ENCODE measurements at regions of chr16 and their contacts with region 1.

Region 1: DNA sequence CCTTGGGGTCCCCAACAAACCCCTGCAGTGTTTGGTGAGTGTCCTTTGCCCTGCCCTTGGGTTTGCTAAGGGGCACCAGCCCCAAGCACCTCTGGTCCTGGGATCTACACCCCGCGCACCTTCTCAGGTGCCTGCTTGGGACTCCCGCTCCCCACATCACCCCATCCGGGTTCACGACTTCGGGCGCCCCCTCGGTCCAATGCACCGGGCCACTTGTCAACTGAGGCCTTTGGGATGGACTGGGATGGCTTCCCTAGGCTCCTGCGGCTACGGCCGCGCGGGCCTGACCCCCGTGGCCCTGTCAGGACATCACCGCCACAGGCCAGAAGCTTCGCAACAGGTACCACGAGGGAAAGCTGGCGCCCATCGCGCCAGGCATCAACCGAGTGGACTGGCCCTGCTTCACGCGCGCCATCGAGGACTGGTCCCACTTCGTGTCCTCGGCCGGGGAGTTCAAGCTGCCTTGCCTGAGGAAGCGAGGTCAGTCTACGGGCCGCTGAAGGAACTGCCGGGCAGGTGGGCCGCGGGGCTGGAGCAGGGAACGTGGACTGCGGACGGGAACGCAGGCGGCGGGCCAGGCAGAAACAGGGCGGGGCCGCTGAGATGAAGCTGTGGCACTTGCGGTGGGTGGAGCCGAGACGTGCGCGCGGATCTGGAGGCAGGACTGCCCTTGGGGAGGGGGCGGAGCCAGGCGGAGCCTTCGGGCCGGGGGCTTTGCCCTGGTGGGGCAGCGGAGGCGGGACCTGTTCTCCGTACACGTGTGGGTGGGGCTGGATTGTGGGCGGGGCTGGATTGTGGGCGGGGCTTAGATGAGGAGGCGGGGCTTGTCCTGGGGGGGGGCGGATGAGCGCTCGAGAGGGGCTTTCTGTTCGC is 13.6 kb upstream of the CNGB1 start:
- DNase-seq: peak; percentile 89
- H3K4me3 Mint-ChIP-seq: peak overlapping the region; percentile 85
- H3K27ac Mint-ChIP-seq: no peak overlapping the region
- H3K4me1 Mint-ChIP-seq: no peaks in the 10 kb centered on the region
- H3K27me3 Mint-ChIP-seq: peaks cover 11% of the 10 kb centered on the region

Region 2: GRCh38 chr16:57810197-57811031 is 174.2 kb before region 1 on chr16:
- intact Hi-C with region 1: loop called (anchors 2 kb)
- DNase-seq: peak; percentile 80
- H3K4me3 Mint-ChIP-seq: peak overlapping the region; percentile 61
- H3K27ac Mint-ChIP-seq: peak overlapping the region; percentile 83
- H3K4me1 Mint-ChIP-seq: peaks cover 36% of the 10 kb centered on the region
- H3K27me3 Mint-ChIP-seq: peaks cover 18% of the 10 kb centered on the region

Region 3: GRCh38 chr16:57846078-57846697 is 138.4 kb before region 1 on chr16:
- intact Hi-C with region 1: no loop called
- DNase-seq: no peak
- H3K4me3 Mint-ChIP-seq: no peak overlapping the region
- H3K27ac Mint-ChIP-seq: no peak overlapping the region
- H3K4me1 Mint-ChIP-seq: peaks cover 6% of the 10 kb centered on the region
- H3K27me3 Mint-ChIP-seq: peaks cover 9% of the 10 kb centered on the region